K562 (cell line): ENCODE measurements at regions of chr11 and their contacts with region 1.

Region 1: DNA sequence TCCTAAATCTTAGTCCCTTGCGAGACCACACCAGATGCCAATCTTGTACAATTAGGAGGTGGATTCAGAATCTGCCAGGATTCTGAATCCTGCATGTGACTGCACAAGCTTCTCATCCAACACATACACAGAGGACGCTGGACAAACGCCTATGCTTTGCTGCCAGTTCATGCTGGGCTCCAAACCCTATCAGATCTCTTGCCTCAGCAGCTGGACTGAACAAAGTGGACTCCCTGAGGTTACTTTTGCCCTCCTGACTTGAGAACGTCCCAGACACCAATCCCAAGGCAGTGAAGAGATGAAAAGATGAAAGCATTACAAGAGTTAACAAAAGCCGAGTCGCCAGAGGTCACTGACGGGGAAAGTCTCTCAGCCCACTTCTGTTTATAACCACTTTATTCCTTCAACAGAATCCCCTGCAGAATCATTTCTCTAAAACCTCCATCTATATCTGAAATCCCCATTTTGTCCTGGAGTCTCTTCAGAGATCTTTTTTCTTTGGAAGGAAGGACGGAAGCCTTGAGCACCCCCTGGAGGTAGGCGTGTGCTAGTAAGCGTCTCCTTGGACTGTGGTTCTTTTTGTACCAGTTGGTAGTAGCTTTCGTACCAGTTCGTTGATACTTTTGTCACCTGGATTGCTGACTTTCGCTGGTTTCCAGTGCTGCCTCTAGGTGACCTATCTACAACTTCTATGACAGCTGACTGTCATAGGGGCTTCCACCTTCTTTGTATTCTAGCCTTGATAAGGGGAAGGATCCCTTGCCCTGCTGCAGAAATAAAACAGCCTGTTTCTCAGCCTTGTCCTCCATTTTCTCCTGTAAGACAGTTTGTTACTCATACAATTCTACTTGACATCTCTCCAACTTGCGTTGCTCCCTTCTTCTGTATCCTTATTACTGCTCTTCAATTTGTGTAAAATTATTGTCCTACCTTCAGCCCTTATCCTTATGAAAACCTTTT is 26.1 kb upstream of the EED start:
- DNase-seq: peak; percentile 76 to 90 (median 83)
- ATAC-seq: peak; percentile 95
- H3K4me3 ChIP-seq: no peak overlapping the region
- H3K27ac ChIP-seq: peak overlapping the region; percentile 56; the same call in 2 of the 3 replicates
- H3K4me1 ChIP-seq: peaks cover 3 to 14% of the 10 kb centered on the region in 2 experiments; a peak in 3 of 5 replicates
- H3K27me3 ChIP-seq: no peaks in the 10 kb centered on the region
- CTCF ChIP-seq: peak; percentile 84 to 92 (median 92)
- EP300 ChIP-seq: no peak
- POLR2A ChIP-seq: no peak
- RAD21 ChIP-seq: peak; percentile 91 to 92

Region 2: DNA sequence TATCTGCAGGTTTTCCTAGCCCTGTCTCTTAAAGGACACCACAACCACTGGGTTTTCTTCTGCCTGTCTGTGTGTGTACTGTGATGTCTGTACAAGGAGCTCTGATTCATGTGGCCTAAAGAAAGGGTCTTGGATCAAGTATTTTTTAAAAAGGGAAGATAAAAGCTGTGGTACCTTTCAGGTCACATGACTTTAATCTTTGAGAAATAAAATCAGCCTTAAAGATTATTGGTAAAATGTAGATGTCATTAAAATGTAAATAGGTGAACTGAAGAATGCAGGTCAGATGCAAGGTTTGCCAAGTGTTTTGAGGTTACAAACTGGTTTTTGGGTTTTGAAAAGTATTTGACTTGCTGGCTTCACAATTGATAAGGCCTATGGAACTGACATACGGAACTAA is 848.7 kb before region 1 on chr11:
- CTCF ChIA-PET with region 1: no interaction called
- POLR2A ChIA-PET with region 1: no interaction called
- in situ Hi-C with region 1: no loop called
- intact Hi-C with region 1: no loop called
- DNase-seq: no peak
- ATAC-seq: no peak
- H3K4me3 ChIP-seq: no peak overlapping the region
- H3K27ac ChIP-seq: no peak overlapping the region
- H3K4me1 ChIP-seq: no peaks in the 10 kb centered on the region
- H3K27me3 ChIP-seq: no peaks in the 10 kb centered on the region
- CTCF ChIP-seq: no peak
- EP300 ChIP-seq: no peak
- POLR2A ChIP-seq: no peak
- RAD21 ChIP-seq: no peak

Region 3: DNA sequence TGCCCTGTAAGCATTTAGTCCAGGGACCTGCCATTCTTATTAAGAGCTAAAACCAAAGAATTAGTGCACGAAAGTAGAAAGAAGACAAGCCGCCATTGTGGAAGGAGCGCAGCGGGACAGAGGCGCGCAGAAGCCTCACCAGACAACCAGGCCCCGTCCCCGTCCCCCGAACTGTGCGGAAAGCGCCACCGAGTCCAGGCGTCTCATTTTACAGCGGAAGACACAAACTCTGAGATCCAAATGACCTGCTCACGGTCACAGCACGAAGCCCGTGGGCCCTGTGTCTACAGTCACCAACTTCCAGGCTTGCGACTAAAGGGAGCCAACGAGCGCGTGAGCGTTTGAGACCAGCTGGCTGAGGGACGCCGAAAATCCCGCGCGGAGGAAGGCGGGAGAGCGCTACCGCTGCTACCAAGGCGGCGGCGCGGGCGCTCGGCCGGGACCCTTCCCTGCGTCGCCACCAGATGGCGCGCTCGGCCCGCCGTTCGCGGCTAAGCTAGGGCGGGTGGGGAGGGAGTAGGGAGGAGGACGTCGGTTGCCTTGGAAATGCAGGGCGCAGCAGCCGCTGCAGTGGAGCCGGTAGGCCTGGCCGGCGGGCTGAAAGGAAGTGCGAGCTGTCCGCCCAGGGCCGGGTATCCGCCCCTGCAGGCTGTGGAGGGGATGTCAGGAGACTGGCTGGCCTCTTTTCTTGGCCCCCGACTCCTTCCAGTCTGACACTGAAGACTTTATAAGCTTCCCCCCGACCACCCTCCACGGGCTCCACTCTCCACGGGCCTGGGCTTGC is 363.7 kb before region 1 on chr11:
- CTCF ChIA-PET with region 1: interaction called, 6 read pairs
- POLR2A ChIA-PET with region 1: no interaction called
- in situ Hi-C with region 1: no loop called
- intact Hi-C with region 1: loop called (anchors 2 kb)
- DNase-seq: peak; percentile 90 to 94 (median 92)
- ATAC-seq: peak; percentile 99
- H3K4me3 ChIP-seq: peak overlapping the region; percentile 33
- H3K27ac ChIP-seq: peak overlapping the region; percentile 56
- H3K4me1 ChIP-seq: peaks cover 4 to 11% of the 10 kb centered on the region in 2 experiments; a peak in 2 of 5 replicates
- H3K27me3 ChIP-seq: no peaks in the 10 kb centered on the region
- CTCF ChIP-seq: peak; percentile 85 to 93 (median 88)
- EP300 ChIP-seq: no peak
- POLR2A ChIP-seq: peak; percentile 76
- RAD21 ChIP-seq: peak; percentile 91 to 97

Region 4: DNA sequence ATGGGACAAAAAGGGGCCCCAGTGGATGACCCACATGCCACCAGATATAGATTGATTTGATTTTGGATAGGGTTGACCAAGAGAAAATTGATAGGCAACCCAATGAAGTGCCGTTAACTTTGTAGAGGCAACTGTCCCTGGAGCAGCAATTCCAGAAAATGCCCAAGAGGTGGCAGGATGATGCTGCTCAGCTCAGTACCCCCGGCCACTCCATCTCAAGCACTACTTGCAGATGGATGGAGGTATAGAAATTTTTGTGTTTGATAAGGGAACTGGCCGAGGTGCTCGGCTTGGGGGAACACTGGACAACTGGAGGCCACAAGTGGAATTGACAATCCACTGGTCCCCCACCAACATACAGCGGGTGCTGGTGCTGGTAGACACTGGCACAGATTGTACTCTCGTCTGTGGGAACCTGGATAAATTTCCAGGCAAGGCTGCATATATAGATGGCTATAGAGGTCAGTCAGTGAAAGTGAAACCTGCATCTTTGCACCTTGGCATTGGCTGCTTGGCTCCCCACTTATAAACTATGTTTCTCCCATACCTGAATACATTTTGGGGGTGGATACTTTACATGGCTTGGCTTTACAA is 276.9 kb before region 1 on chr11:
- CTCF ChIA-PET with region 1: interaction called, 4 read pairs
- POLR2A ChIA-PET with region 1: interaction called, 4 read pairs
- in situ Hi-C with region 1: no loop called
- intact Hi-C with region 1: loop called (anchors 1 kb)
- DNase-seq: peak; percentile 38 to 69 (median 52)
- ATAC-seq: peak; percentile 92
- H3K4me3 ChIP-seq: no peak overlapping the region
- H3K27ac ChIP-seq: no peak overlapping the region
- H3K4me1 ChIP-seq: no peaks in the 10 kb centered on the region; a peak in 1 of 5 replicates
- H3K27me3 ChIP-seq: no peaks in the 10 kb centered on the region
- CTCF ChIP-seq: peak; percentile 73 to 86 (median 82)
- EP300 ChIP-seq: no peak
- POLR2A ChIP-seq: no peak
- RAD21 ChIP-seq: peak; percentile 72 to 89

Region 5: DNA sequence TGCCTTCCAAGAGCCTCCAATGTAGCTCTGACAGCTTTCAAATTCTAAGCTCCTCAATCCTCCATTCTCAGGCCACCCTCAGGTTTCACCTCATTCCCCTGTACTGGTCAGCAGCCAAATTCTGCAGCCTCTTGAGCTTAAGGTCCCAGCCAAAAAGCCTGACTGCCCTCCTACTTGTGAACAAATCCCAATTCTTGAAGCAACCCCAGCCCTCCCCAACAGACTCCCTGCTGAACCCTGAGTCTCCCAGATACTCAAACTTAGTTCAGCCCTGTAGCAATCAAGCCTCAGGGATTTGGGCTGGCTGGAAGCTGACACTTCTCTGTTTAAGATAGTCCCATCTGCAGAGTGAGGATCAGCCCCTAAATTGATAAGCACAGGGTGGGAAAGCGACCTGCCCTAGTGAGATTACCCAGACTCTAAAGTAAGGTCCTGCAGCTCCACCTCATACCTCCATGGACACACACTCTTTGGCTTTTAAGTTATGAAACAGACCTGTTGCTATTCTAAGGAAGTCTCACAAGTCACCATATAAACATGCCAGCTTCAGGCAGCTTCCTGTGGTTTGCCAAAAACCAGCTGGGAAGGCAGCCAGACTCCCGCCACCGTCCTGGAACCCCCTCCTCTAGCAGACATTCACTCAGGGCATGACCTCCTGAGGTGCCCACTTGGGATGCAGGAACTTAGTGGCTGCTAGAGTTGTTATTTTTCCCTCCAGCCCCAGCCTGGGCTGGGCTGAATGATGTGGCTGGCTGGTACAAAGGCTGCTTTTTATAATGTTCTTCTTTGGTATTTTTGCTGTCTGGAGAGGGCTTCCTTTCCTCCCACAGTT is 67.0 kb before region 1 on chr11:
- CTCF ChIA-PET with region 1: no interaction called
- POLR2A ChIA-PET with region 1: no interaction called
- in situ Hi-C with region 1: no loop called
- intact Hi-C with region 1: loop called (anchors 2 kb)
- DNase-seq: peak; percentile 76 to 96 (median 86)
- ATAC-seq: peak; percentile 79
- H3K4me3 ChIP-seq: no peak overlapping the region; the same call in 1 of the 2 replicates
- H3K27ac ChIP-seq: peak overlapping the region; percentile 78
- H3K4me1 ChIP-seq: peaks cover 46 to 78% of the 10 kb centered on the region in 2 experiments
- H3K27me3 ChIP-seq: no peaks in the 10 kb centered on the region; a peak in 1 of 5 replicates
- CTCF ChIP-seq: peak in 2 of 3 experiments; percentile 7 to 24; a peak in 2 of 6 replicates
- EP300 ChIP-seq: peak; percentile 98
- POLR2A ChIP-seq: no peak
- RAD21 ChIP-seq: peak; percentile 17 to 56; a peak in 3 of 4 replicates

Region 6: DNA sequence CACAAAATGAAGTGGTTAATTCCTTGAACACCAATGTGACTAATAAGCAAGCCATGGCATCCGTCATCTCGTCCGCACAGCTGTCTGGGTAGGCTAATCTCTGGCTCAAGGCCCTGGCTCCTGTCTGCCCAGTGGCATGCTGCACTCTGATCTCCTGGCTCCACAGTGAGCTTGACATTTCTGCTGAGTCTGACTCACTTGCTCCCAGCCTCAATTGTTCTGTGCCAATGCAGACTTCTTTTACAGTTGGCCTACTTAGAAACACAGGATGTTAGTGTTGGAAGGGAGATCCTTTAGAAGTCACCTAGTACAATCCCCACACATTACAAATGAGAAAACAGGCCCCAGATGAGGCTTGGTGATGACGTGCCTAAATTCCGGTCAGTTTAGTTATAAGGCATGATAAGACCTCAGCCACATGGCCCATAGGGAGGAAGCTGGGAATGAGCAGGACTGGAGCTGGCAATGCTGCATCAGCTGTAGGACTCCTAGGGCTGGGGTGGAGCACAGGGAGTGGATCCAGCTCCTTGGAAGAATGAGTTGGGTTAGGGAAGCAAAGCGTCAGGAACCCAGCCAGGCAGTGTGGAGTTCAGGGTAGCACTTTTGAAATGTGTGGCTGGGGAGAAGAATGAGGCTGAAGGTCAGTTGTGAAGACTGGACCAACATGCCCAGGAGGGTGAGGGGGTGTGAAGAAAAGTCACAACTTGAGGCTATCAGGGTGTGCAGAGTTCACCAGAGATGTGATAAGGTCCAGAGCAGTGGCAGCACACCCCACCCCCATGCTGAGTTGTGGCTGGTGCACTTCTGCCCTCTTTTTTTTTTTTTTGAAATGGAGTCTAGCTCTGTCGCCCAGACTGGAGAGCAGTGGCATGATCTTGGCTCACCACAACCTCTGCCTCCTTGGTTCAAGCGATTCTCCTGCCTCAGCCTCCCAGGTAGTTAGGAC is 44.0 kb before region 1 on chr11:
- CTCF ChIA-PET with region 1: no interaction called
- POLR2A ChIA-PET with region 1: no interaction called
- in situ Hi-C with region 1: no loop called
- intact Hi-C with region 1: loop called (anchors 2 kb)
- DNase-seq: peak; percentile 76 to 87 (median 78)
- ATAC-seq: peak; percentile 45
- H3K4me3 ChIP-seq: no peak overlapping the region
- H3K27ac ChIP-seq: peak overlapping the region; percentile 81
- H3K4me1 ChIP-seq: peaks cover 54 to 76% of the 10 kb centered on the region in 2 experiments
- H3K27me3 ChIP-seq: no peaks in the 10 kb centered on the region; a peak in 1 of 5 replicates
- CTCF ChIP-seq: no peak
- EP300 ChIP-seq: peak; percentile 90
- POLR2A ChIP-seq: no peak; the same call in 1 of the 2 replicates
- RAD21 ChIP-seq: no peak

Region 7: GRCh38 chr11:86193297-86194095 is 24.9 kb before region 1 on chr11:
- CTCF ChIA-PET with region 1: no interaction called
- POLR2A ChIA-PET with region 1: interaction called, 3 read pairs
- in situ Hi-C with region 1: no loop called
- intact Hi-C with region 1: loop called (anchors 1 kb)
- DNase-seq: peak; percentile 88 to 97 (median 90)
- ATAC-seq: peak; percentile 94
- H3K4me3 ChIP-seq: no peak overlapping the region
- H3K27ac ChIP-seq: peak overlapping the region; percentile 87
- H3K4me1 ChIP-seq: peaks cover 14 to 59% of the 10 kb centered on the region in 2 experiments
- H3K27me3 ChIP-seq: no peaks in the 10 kb centered on the region
- CTCF ChIP-seq: peak; percentile 80 to 92 (median 89)
- EP300 ChIP-seq: peak; percentile 94
- POLR2A ChIP-seq: no peak
- RAD21 ChIP-seq: peak; percentile 90 to 95

Region 8: DNA sequence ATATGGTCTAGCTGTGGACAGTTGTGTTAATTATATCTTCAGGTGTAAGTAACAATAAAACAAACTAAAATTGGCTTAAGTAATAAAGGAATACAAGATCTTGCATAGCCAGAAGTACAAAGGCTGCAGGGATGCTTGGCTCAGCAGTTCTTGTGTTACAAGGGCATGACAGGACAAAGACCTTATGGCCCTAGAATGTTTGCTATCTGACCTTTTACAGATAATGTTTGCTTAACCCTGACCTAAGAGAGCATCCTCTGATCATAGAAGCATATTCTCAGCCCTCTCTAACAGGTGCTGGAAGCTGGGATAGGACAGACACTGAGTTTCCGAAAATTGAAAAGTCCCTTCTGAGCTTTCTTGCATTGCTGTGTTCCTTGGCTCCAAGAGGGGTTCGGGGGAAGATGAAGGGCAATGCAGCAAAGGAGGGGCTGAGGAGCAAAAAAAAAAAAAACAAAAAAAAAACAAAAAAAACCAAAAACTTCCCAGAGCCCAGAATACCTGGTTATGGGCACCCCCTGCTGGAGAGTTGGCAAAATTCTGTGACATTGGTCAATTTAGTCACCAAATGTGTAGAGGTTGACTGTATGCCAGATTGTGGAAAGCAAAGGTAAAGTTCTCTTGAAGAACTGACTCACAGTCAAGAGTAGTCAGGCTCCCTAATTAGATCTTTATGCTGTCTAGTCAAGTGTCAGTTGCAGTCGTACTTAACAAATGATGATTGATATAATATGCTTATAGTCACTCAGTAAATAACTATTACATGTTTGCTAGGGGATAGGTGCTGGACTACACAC is 73.3 kb after region 1 on chr11:
- CTCF ChIA-PET with region 1: no interaction called
- POLR2A ChIA-PET with region 1: no interaction called
- in situ Hi-C with region 1: no loop called
- intact Hi-C with region 1: loop called (anchors 5 kb)
- DNase-seq: peak; percentile 57 to 76 (median 64)
- ATAC-seq: peak; percentile 80
- H3K4me3 ChIP-seq: no peak overlapping the region
- H3K27ac ChIP-seq: no peak overlapping the region
- H3K4me1 ChIP-seq: no peaks in the 10 kb centered on the region; a peak in 1 of 5 replicates
- H3K27me3 ChIP-seq: no peaks in the 10 kb centered on the region
- CTCF ChIP-seq: peak; percentile 70 to 88 (median 84)
- EP300 ChIP-seq: no peak
- POLR2A ChIP-seq: no peak
- RAD21 ChIP-seq: peak; percentile 78 to 83

Region 9: GRCh38 chr11:86483940-86484794 is 265.8 kb after region 1 on chr11:
- CTCF ChIA-PET with region 1: no interaction called
- POLR2A ChIA-PET with region 1: no interaction called
- in situ Hi-C with region 1: no loop called
- intact Hi-C with region 1: no loop called
- DNase-seq: peak; percentile 63 to 75 (median 70)
- ATAC-seq: peak; percentile 84
- H3K4me3 ChIP-seq: no peak overlapping the region
- H3K27ac ChIP-seq: no peak overlapping the region
- H3K4me1 ChIP-seq: peaks cover 0 to 10% of the 10 kb centered on the region in 2 experiments; a peak in 3 of 5 replicates
- H3K27me3 ChIP-seq: no peaks in the 10 kb centered on the region
- CTCF ChIP-seq: no peak
- EP300 ChIP-seq: peak; percentile 55
- POLR2A ChIP-seq: no peak
- RAD21 ChIP-seq: no peak